MCF 10A (cell line): ENCODE measurements at regions of chr11 and their contacts with region 1.

Region 1: DNA sequence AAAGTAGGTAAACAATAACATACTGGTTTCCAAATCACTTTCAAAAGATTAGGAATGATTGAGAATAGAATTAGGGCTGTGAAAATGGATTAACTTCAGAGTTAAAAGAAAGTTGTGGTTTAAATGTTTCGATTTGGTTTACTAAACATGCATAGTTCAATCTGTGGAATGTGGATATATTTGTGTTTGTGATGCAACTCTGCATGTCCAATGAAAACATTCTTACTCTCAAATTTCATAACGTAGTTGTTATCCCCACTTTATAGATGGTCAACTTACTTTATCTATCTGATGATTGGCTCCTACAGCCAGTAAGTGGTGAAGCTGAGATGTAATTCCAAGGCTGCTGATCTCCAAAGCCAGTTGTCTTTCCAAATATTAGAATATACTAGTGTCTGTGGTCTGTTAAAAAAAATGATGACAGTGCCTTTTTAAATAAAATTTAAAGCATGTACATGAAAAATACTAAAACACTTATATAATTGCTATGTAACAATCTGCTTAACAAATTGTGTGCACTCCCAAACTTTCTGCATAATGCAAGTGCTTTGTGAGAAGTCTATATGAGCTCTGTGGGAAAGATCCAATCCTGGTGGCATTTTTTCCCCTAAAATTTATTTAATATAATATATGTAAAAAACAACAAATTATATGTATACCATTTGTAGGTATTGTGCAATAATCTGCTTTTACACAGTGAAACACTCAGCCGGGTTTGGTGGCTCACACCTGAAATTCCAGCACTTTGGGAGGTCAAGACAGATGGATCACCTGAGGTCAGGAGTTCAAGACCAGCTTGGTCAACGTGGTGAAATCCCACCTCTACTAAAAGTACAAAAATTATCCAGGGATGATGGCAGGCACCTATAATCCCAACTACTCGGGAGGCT is 9.7 kb upstream of the SIK3 start:
- DNase-seq: peak; percentile 25
- H3K4me3 Mint-ChIP-seq: no peak overlapping the region
- H3K27ac Mint-ChIP-seq: no peak overlapping the region
- H3K4me1 Mint-ChIP-seq: no peaks in the 10 kb centered on the region
- H3K27me3 Mint-ChIP-seq: no peaks in the 10 kb centered on the region
- CTCF ChIP-seq: no peak

Region 2: DNA sequence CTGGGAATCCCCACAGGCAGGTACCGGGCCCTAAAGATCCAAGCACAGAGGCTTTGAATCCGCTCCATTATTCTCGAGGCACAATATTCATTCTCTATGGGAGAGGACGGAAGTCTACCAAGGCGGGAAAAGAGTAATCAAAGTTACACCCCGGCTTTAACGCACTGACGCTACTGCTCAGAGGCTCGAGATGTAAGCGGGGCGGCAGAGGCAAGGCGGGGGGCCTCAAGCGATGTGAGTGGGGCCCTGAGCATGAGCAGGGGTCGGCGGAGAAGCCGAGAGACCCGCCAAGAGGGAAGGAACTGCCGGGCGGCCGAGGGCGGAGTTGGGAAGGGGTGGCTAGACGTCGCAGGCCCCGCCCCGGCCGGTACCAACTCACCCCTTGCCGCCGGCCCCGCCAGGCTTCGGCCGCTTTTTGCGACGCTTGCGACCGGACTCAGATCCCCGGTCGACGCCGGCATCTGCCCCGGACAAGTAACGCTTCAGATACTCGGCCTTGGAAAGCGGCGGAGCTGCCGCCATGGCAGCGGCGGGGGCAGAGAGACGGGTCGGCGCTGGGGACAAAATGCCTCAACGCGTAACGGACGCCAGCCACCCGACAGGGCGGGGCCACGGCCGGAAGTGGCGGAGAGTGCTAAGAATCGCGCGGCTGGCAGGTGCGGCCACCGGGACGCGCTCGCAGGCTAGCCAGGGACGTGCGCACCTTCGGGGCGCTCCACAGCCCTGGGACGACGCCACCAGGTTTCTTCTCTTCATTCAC is 335.3 kb before region 1 on chr11 and contains the start of gene BUD13:
- CTCF ChIA-PET with region 1: interaction called, 6 read pairs
- POLR2A ChIA-PET with region 1: no interaction called
- intact Hi-C with region 1: loop called (anchors 5 kb)
- DNase-seq: peak; percentile 86
- H3K4me3 Mint-ChIP-seq: peak within 1 kb of the TSS; percentile 97
- H3K27ac Mint-ChIP-seq: peak within 1 kb of the TSS; percentile 98
- H3K4me1 Mint-ChIP-seq: peaks cover 25% of the 10 kb centered on the region
- H3K27me3 Mint-ChIP-seq: no peaks in the 10 kb centered on the region
- CTCF ChIP-seq: no peak
- total RNA-seq, gene BUD13: 11.8 and 15.1 TPM in 2 replicates

Region 3: DNA sequence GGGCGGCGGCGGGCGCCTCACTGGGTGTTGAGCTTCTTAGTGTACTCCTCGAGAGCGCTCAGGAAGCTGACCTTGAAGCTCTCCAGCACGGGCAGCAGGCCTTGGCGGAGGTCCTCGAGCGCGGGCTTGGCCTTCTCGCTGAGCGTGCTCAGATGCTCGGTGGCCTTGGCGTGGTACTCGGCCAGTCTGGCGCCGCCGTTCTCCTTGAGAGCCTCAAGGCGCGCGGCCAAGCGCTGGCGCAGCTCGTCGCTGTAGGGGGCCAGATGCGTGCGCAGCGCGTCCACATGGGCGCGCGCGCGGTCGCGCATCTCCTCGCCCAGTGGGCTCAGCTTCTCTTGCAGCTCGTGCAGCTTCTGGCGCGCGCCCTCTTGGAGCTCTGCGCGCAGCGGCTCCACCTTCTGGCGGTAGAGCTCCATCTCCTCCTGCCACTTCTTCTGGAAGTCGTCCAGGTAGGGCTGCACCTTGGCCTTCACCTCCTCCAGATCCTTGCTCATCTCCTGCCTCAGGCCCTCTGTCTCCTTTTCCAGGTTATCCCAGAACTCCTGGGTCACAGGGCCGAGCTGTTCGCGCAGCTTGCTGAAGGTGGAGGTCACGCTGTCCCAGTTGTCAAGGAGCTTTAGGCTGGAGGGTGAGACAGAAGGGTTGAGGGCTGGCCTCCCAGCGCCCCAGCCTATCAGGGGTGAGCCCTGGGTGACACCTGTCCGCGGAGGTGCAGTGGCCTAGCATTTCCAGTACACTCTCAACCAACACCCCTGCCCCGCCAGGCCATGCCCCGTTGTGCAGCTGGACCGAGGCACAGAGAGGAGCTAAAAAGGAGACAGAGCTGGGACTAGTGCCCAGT is 271.9 kb before region 1 on chr11:
- CTCF ChIA-PET with region 1: interaction called, 16 read pairs
- POLR2A ChIA-PET with region 1: interaction called, 3 read pairs
- intact Hi-C with region 1: loop called (anchors 1 kb)
- DNase-seq: peak; percentile 95
- H3K4me3 Mint-ChIP-seq: peak overlapping the region; percentile 43
- H3K27ac Mint-ChIP-seq: no peak overlapping the region
- H3K4me1 Mint-ChIP-seq: no peaks in the 10 kb centered on the region
- H3K27me3 Mint-ChIP-seq: no peaks in the 10 kb centered on the region
- CTCF ChIP-seq: peak; percentile 67

Region 4: DNA sequence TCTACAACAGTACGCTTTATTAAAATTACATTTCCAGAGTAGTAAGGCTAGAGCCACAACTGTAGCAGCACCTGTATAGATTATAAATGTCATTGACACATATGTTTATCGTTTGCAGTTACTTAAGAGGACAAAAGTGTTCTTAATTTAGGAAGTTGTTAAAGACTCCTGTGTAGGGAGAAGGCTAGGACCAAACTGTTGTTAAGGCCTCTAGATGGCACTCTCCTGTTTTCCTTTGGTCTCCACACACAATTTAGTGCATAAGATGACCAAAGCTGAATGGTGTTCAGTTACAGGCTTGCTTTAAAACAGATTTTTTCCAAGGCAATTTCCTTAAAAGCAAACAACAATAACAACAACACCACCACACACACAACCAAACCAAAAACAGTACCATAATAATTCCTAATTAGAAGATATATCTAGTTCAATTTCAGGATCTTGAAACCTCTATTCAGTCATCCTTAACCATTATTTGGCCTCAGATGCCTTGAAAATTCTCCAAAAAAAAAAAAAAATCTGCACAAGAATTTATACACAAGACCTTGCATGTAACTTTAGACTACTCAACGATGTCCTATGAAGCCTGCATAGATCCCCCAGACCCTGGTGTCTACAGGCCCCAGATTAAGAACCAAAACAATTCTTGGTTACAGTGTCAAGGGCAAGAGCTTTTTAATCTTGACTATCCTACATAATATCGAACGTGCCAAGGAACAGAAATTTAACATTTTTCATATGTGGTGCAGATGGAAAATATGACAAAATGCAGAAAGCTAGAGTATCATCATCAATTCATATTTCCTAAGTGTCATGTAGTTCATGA is 227.9 kb before region 1 on chr11:
- CTCF ChIA-PET with region 1: interaction called, 232 read pairs
- POLR2A ChIA-PET with region 1: interaction called, 4 read pairs
- intact Hi-C with region 1: loop called (anchors 1 kb)
- DNase-seq: peak; percentile 74
- H3K4me3 Mint-ChIP-seq: no peak overlapping the region
- H3K27ac Mint-ChIP-seq: no peak overlapping the region
- H3K4me1 Mint-ChIP-seq: no peaks in the 10 kb centered on the region
- H3K27me3 Mint-ChIP-seq: no peaks in the 10 kb centered on the region
- CTCF ChIP-seq: peak; percentile 60

Region 5: DNA sequence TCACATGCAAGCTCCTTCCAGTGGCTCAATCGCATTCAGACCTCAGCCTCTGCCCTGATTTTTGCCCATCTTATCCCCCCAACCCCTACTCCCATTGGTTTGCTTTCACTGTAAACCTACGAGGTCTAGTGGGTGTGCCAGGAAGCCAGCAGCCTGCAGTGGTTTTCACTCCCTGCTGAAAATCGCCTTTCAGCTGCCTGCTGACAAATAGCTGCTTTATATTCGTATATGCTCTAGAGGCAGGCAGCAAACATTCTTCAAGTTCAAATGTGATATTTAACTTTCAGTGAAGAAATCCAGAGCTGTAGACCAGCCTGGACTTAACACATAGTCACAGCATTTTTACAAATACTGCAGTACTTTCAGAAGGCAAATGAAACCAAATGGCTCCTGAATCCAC is 177.8 kb before region 1 on chr11:
- CTCF ChIA-PET with region 1: interaction called, 12 read pairs
- POLR2A ChIA-PET with region 1: no interaction called
- intact Hi-C with region 1: no loop called
- DNase-seq: no peak
- H3K4me3 Mint-ChIP-seq: no peak overlapping the region
- H3K27ac Mint-ChIP-seq: no peak overlapping the region
- H3K4me1 Mint-ChIP-seq: peaks cover 12% of the 10 kb centered on the region
- H3K27me3 Mint-ChIP-seq: no peaks in the 10 kb centered on the region
- CTCF ChIP-seq: no peak

Region 6: DNA sequence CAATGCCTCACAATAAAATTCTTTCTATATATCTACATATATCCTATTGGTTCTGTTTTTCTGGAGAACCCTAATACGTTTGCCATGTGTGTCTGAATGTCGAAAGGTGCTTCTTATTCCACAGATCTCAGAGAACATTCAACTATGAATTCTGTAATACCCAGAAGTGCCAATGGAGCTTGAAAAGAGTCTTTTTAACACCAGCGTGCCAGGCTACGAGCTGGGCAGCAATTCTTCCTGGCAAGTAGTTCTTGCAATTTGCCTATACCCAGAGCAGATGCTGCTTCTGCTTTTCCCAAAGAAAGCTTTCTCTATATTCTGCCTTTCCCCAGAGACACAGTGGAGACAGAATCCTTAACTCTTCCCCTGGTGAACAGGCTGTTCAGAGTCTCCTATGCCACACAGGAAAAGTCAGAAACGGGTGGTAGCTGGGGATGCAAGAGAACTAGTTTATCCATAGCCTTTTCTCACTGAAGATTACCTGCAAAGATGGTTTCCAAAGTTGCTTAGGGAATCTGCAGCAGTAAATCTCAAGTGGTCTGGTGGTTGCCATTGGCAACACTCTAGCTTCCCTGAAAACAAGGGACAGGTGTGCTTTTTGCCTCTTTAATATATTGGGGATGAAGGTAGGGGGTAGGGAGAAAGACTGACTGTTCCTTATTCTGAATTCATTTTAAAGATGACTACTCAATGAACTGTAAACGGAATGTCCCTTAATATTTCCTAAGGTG is 19.4 kb after region 1 on chr11:
- CTCF ChIA-PET with region 1: interaction called, 26 read pairs
- POLR2A ChIA-PET with region 1: no interaction called
- intact Hi-C with region 1: no loop called
- DNase-seq: no peak
- H3K4me3 Mint-ChIP-seq: no peak overlapping the region
- H3K27ac Mint-ChIP-seq: no peak overlapping the region
- H3K4me1 Mint-ChIP-seq: no peaks in the 10 kb centered on the region
- H3K27me3 Mint-ChIP-seq: no peaks in the 10 kb centered on the region
- CTCF ChIP-seq: no peak